HAP-1 (cell line): ENCODE measurements at regions of chr19 and their contacts with region 1.

Region 1: GRCh38 chr19:38239816-38240215 is 15.8 kb upstream of the DPF1 start:
- DNase-seq: no peak
- H3K4me3 ChIP-seq: no peak overlapping the region
- H3K4me1 ChIP-seq: peaks cover 4% of the 10 kb centered on the region; the same call in 1 of the 2 replicates
- H3K27me3 ChIP-seq: no peaks in the 10 kb centered on the region

Region 2: DNA sequence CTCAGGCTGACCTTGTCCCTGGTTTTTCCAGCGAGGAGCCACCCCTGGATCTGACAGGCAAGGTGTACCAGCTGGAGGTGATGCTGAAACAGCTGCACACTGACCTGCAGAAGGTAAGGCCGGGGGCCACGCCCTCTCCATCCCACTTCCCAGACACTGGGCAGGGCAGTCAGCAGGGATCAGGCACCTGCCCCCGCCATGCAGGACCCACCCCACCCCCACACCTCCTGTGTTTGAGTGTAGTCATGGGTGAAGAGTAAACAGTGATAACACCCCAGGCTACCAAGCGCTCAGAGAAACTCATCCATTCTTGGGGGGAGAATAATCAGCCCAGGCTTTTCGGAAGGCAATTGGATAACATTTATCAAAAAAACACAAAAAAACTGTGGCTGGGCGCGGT is 35.7 kb before region 1 on chr19:
- in situ Hi-C with region 1: no loop called
- DNase-seq: no peak
- H3K4me3 ChIP-seq: no peak overlapping the region
- H3K4me1 ChIP-seq: no peaks in the 10 kb centered on the region
- H3K27me3 ChIP-seq: no peaks in the 10 kb centered on the region

Region 3: DNA sequence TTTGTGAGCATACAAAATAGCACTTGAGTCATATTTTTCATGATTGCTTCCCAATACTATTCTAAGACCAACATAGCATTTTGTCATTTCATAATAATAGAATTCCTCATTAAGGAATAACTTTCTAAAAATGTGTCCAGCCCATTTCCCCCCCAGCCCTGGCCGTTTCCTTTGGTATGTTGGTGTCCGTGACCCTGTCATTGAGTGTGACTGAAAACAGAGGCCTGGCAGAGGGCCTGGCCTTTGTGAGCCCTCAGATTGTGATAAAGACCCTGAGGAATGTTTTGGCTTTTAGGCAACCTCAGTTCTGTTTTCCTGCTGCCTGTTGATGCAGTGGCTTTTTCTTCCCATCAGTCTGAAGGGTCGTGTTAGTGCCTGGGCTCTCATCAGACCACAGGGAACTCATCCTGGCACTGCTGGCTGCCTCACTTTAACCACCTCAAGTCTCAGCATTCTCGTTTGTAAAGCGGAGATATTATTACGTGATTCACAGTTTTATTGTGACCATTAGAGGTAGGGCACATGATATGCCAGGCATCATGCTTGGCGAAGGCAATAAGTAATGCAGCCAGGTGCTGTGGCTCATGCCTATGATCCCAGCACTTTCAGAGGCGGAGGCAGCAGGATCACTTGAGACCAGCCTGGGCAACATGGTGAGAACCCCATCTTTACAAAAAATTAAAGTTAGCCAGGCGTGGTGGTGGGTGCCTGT is 38.3 kb after region 1 on chr19:
- in situ Hi-C with region 1: no loop called
- DNase-seq: no peak
- H3K4me3 ChIP-seq: no peak overlapping the region
- H3K4me1 ChIP-seq: peaks cover 2% of the 10 kb centered on the region; the same call in 1 of the 2 replicates
- H3K27me3 ChIP-seq: no peaks in the 10 kb centered on the region

Region 4: DNA sequence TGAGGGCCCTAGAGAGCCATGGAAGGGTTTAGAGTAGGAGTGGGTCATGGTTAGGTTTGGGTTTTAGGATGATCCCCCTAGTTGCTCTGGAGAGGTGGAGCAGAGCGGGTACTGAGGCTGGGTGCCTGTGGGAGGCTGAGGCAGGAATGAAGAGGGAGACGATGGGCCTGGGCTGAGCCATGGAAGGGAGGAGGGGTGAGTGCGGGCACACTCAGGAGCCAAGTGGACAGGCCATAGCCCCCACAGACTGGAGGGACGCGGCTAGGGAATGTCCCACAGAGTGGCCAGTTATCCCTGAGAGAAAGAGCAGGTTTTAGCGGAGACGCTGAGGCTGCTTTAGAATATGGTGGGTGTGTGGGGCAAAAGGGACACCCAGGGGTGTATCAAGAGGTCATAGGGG is 89.8 kb after region 1 on chr19:
- in situ Hi-C with region 1: loop called (anchors 5 kb)
- DNase-seq: no peak
- H3K4me3 ChIP-seq: no peak overlapping the region
- H3K4me1 ChIP-seq: no peaks in the 10 kb centered on the region
- H3K27me3 ChIP-seq: no peaks in the 10 kb centered on the region